PC-3 (cell line): ENCODE measurements at regions of chr15 and their contacts with region 1.

Region 1: DNA sequence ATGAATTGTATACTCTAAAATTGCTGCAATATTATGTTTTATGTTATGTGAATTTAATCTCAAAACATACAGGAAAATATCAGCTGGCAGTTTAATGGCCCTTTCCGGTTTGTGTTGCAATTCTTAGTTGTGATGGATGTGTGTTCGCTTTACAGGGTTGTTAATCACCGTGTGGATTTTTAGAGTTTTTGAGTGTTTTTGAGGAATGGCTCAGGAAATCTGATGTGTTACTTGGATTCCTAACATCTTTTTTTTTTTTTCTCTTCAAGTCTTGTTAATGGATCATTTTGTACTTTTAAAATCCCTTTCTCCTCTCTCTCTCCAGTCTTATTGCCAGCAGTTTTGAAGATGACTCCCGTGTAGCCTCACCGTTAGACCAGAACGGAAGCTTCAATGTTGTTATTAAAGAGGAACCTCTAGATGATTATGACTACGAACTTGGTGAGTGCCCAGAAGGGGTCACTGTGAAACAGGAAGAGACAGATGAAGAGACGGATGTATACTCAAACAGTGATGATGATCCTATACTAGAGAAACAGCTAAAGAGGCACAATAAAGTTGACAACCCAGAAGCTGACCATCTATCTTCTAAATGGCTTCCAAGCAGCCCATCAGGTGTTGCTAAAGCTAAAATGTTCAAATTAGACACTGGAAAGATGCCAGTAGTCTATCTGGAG is 35.7 kb downstream of the MGA start:
- DNase-seq: peak; percentile 68
- ATAC-seq: peak; percentile 52
- H3K4me3 ChIP-seq: no peak overlapping the region
- H3K27ac ChIP-seq: no peak overlapping the region
- H3K4me1 ChIP-seq: peaks cover 15% of the 10 kb centered on the region
- H3K27me3 ChIP-seq: no peaks in the 10 kb centered on the region
- CTCF ChIP-seq: peak; percentile 77

Region 2: DNA sequence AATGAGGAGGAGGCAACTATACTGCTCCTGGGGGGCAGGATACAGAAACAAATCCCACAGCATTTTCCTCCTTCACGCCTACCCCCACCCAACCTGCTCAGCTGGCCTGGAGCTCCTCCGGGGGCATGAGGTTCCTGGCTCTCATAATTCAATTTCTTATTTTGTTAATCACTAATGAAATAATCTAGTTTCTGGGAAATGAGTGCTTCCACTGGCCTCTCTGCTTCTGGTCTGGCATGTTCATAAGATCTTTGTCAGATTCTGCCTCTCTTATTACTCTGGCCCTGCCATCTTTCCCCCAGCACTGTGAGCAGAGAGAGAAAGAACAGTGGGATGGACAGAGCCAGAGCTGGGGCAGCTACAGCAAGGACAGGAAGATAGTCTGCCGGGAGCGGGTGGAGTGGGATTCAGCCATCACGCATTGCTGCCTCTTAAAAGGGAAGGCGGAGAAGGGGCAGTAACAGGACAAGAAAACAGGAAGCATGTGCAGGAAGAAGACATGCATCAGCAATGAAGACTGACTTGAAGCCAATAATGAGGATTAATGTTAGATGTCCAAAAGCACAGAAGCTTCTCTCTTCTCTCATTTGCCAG is 165.4 kb before region 1 on chr15:
- CTCF ChIA-PET with region 1: interaction called, 12 read pairs
- POLR2A ChIA-PET with region 1: no interaction called
- intact Hi-C with region 1: no loop called
- DNase-seq: no peak
- ATAC-seq: no peak
- H3K4me3 ChIP-seq: no peak overlapping the region
- H3K27ac ChIP-seq: no peak overlapping the region
- H3K4me1 ChIP-seq: no peaks in the 10 kb centered on the region
- H3K27me3 ChIP-seq: no peaks in the 10 kb centered on the region
- CTCF ChIP-seq: no peak

Region 3: GRCh38 chr15:41666353-41666920 is 29.5 kb before region 1 on chr15:
- CTCF ChIA-PET with region 1: no interaction called
- POLR2A ChIA-PET with region 1: interaction called, 3 read pairs
- intact Hi-C with region 1: loop called (anchors 2 kb)
- DNase-seq: peak; percentile 74
- ATAC-seq: peak; percentile 91
- H3K4me3 ChIP-seq: peak overlapping the region; percentile 7; the same call in 1 of the 2 replicates
- H3K27ac ChIP-seq: peak overlapping the region; percentile 9; the same call in 1 of the 2 replicates
- H3K4me1 ChIP-seq: peaks cover 27% of the 10 kb centered on the region
- H3K27me3 ChIP-seq: no peaks in the 10 kb centered on the region
- CTCF ChIP-seq: no peak

Region 4: GRCh38 chr15:41683955-41684354 is 11.9 kb before region 1 on chr15:
- CTCF ChIA-PET with region 1: no interaction called
- POLR2A ChIA-PET with region 1: interaction called, 17 read pairs
- intact Hi-C with region 1: no loop called
- DNase-seq: no peak
- ATAC-seq: peak; percentile 54; the same call in 1 of the 2 replicates
- H3K4me3 ChIP-seq: no peak overlapping the region
- H3K27ac ChIP-seq: no peak overlapping the region
- H3K4me1 ChIP-seq: no peaks in the 10 kb centered on the region
- H3K27me3 ChIP-seq: no peaks in the 10 kb centered on the region
- CTCF ChIP-seq: no peak

Region 5: DNA sequence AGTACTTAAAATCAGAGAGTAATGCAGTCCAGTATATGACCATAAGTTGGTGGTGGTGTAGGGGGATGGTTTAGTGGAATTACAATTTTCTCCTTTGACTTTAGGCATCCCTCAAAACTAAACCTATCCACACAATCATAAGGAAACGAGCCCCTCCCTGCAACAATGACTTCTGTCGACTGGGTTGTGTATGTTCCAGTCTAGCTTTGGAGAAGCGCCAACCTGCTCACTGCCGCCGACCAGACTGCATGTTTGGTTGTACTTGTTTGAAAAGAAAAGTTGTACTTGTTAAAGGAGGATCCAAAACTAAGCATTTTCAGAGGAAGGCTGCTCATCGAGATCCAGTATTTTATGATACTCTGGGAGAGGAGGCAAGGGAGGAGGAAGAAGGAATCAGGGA is 17.2 kb after region 1 on chr15:
- CTCF ChIA-PET with region 1: no interaction called
- POLR2A ChIA-PET with region 1: no interaction called
- intact Hi-C with region 1: no loop called
- DNase-seq: no peak
- ATAC-seq: no peak
- H3K4me3 ChIP-seq: no peak overlapping the region
- H3K27ac ChIP-seq: no peak overlapping the region
- H3K4me1 ChIP-seq: no peaks in the 10 kb centered on the region
- H3K27me3 ChIP-seq: no peaks in the 10 kb centered on the region
- CTCF ChIP-seq: no peak

Region 6: DNA sequence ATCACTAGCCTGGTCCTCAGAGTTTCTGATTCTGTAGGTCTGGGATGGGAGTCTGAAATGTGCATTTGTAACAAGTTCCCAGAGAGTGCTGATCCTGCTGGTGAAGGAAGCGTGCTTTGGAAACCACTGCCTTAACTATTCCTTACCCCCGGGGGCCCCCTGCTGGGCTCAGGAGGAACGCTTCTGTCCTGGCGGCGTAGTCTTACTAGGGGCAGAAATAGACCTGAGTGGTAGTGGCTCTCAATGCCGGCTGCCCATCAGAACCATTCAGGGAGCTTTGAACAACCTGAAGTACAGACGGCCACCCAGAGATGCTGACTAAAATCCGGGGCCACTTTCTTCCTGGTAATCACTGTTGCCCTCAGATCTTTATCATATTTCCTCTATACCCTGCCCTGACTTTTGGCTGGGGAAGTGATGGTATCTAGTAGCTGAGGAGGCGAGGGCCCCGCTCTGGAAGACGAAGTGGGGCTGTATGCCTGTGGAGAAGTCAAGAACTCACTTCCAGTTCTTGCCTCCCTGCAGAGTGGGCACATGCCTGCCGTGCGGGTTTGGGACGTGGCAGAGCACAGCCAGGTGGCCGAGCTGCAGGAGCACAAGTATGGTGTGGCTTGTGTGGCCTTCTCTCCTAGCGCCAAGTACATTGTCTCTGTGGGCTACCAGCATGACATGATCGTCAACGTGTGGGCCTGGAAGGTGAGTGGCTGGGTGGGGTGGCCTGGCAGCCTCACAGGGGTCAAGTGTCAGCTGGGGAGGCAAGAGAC is 115.7 kb after region 1 on chr15:
- CTCF ChIA-PET with region 1: interaction called, 3 read pairs
- POLR2A ChIA-PET with region 1: interaction called, 5 read pairs
- intact Hi-C with region 1: loop called (anchors 1 kb)
- DNase-seq: peak; percentile 89
- ATAC-seq: peak; percentile 96
- H3K4me3 ChIP-seq: no peak overlapping the region
- H3K27ac ChIP-seq: no peak overlapping the region
- H3K4me1 ChIP-seq: peaks cover 14% of the 10 kb centered on the region
- H3K27me3 ChIP-seq: no peaks in the 10 kb centered on the region
- CTCF ChIP-seq: peak; percentile 94